ENCODE measurements at regions of chr11 and their contacts with region 1.

Region 1: GRCh38 chr11:113730887-113731726 is 25.0 kb upstream of the TMPRSS5 start:
- DNase-seq: peak; percentile 23
- H3K4me3 ChIP-seq: no peak overlapping the region
- H3K27ac ChIP-seq: no peak overlapping the region
- H3K27me3 ChIP-seq: no peaks in the 10 kb centered on the region
- CTCF ChIP-seq: peak; percentile 62

Region 2: DNA sequence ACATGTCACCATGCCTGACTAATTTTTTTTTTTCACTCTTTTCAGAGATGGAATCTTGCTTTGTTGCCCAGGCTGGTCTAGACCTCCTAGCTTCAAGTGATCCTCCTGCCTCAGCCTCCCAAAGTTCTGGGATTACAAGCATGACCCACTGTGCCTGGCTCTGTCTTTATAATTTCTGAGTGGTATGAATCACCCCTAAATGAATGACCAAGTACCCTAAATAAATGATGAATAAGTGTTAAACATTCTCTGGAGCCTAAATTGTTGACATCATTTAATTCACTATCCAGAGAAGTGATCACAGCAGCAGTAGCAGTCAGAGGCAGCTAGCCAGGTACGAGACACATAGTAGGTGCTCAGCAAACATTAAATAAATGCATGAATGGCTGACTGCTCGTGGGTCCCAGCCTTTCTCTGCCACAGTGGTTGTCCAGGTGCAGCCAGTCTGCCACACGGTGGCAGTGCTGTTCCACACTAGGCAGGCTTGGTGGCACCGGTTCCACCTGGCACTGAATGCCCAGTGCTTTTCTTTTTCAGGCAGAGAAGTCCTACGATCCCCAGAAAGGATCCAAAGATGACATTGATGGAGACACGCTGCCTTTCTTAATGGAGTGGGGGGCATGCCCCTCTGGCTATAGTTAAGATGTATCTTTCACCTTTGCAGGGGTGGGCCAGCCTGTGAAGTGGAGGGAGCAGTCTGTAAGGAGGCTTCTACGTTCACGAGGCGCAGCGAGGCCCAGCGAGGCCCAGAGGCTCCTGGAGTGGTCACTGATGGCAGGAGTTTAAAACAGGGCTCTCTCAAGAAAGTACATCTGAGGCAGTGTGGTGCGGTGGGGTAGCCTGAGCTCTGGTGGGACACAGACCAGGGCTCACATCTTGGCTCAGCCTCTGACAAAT is 425.4 kb before region 1 on chr11:
- CTCF ChIA-PET with region 1: interaction called, 88 read pairs
- POLR2A ChIA-PET with region 1: no interaction called
- DNase-seq: peak; percentile 21
- H3K4me3 ChIP-seq: no peak overlapping the region
- H3K27ac ChIP-seq: no peak overlapping the region
- H3K27me3 ChIP-seq: peaks cover 11% of the 10 kb centered on the region
- CTCF ChIP-seq: peak; percentile 98

Region 3: GRCh38 chr11:113314389-113315301 is 416.5 kb before region 1 on chr11 and contains the start of gene TTC12:
- CTCF ChIA-PET with region 1: interaction called, 18 read pairs
- POLR2A ChIA-PET with region 1: no interaction called
- DNase-seq: peak; percentile 61
- H3K4me3 ChIP-seq: peak within 1 kb of the TSS; percentile 95
- H3K27ac ChIP-seq: peak within 1 kb of the TSS; percentile 53
- H3K27me3 ChIP-seq: peaks cover 4% of the 10 kb centered on the region
- CTCF ChIP-seq: no peak
- polyA plus RNA-seq, gene TTC12: 17.6 and 19.0 TPM in 2 replicates

Region 4: GRCh38 chr11:113705871-113706655 is 25.0 kb before region 1 on chr11 and contains the start of gene TMPRSS5:
- CTCF ChIA-PET with region 1: no interaction called
- POLR2A ChIA-PET with region 1: no interaction called
- DNase-seq: no peak
- H3K4me3 ChIP-seq: no peak within 1 kb of the TSS
- H3K27ac ChIP-seq: no peak within 1 kb of the TSS
- H3K27me3 ChIP-seq: no peaks in the 10 kb centered on the region
- CTCF ChIP-seq: no peak
- polyA plus RNA-seq, gene TMPRSS5: 0.04 TPM in 1 of 2 replicates, not detected in the other

Region 5: GRCh38 chr11:113773416-113774173 is 42.5 kb after region 1 on chr11 and contains the start of gene ZW10:
- CTCF ChIA-PET with region 1: interaction called, 10 read pairs
- POLR2A ChIA-PET with region 1: no interaction called
- DNase-seq: peak; percentile 93
- H3K4me3 ChIP-seq: peak within 1 kb of the TSS; percentile 97
- H3K27ac ChIP-seq: peak within 1 kb of the TSS; percentile 63
- H3K27me3 ChIP-seq: peaks cover 7% of the 10 kb centered on the region
- CTCF ChIP-seq: peak; percentile 92
- polyA plus RNA-seq, gene ZW10: 12.5 and 14.9 TPM in 2 replicates